GM18951 (cell line): ENCODE measurements at regions of chr10 and their contacts with region 1.

Region 1: DNA sequence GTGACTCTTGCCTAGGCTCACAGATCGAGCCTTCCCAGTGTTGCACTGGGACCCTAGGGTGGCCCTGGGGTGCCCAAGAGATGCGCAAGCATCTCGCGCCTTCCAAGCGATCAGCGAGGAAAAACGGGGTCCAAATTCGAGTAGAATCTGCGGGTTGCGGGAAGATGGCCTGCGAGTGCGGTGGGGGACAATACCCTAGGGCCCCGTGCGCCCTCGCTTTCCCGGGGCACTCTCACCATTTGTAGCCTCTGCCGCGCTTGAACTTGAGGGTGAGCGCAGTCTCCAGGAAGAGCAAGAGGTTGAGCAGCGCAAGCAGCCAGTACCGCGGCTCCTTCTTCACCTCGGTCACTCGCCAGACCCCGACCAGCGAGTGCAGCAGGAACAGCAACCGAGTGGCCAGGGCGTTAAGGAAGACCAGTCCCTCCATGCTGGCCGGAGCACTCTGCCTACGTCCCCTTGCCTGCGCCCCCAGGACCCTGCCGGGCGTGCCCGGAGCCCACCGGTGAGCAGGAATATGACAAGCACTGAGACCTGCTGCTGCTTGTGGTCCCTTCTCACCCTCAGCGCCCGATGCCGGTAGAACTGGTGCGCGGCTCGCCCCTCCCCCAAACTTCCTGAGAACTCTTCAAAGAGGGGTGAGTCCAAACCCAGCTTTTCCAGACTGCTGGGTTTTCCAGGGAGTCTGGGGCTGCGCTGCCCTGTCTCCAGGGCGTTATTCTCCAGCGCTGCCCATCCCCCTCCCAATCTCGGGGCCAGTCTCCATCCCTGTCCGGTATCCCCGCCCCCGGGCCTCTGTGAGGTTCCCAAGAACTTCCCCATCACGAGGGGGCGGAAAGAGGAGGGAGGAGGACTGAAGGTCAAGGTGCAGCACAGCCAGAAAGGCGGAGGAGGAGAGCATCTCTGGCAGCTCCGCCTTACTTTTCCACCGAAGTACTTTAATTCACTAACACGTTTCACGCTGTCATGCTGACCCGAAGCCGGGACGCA is at the start of gene TMEM26:
- POLR2A ChIP-seq: no peak

Region 2: GRCh38 chr10:60816628-60817397 is 636.1 kb before region 1 on chr10:
- in situ Hi-C with region 1: loop called (anchors 25 kb)
- POLR2A ChIP-seq: no peak